ENCODE measurements at regions of chr6 and their contacts with region 1.

Region 1: GRCh38 chr6:101114703-101115102 is 233.6 kb upstream of the ASCC3 start:
- DNase-seq: peak; percentile 66 to 88
- H3K4me3 ChIP-seq: no peak overlapping the region
- H3K4me1 ChIP-seq: peaks cover 44% of the 10 kb centered on the region
- H3K27me3 ChIP-seq: no peaks in the 10 kb centered on the region

Region 2: GRCh38 chr6:101393251-101393828 is 278.6 kb after region 1 on chr6 and contains the start of gene GRIK2:
- in situ Hi-C with region 1: loop called (anchors 25 kb)
- DNase-seq: peak; percentile 73 to 86
- H3K4me3 ChIP-seq: peak within 1 kb of the TSS; percentile 62
- H3K4me1 ChIP-seq: peaks cover 11% of the 10 kb centered on the region
- H3K27me3 ChIP-seq: no peaks in the 10 kb centered on the region

Measured in HAP-1 (cell line).